Sigmoid colon (tissue), 7 donors: ENCODE measurements at regions of chr17 and their contacts with region 1.

Region 1: GRCh38 chr17:29574732-29575504 is 6.4 kb downstream of the TP53I13 start:
- DNase-seq: peak; percentile 58
- H3K4me3 ChIP-seq: no peak overlapping the region
- H3K27ac ChIP-seq: no peak overlapping the region
- H3K4me1 ChIP-seq: peaks cover 0 to 40% (median 32%) of the 10 kb centered on the region in 4 donors
- H3K27me3 ChIP-seq: no peaks in the 10 kb centered on the region
- CTCF ChIP-seq: no peak
- EP300 ChIP-seq: no peak
- POLR2A ChIP-seq: no peak

Region 2: DNA sequence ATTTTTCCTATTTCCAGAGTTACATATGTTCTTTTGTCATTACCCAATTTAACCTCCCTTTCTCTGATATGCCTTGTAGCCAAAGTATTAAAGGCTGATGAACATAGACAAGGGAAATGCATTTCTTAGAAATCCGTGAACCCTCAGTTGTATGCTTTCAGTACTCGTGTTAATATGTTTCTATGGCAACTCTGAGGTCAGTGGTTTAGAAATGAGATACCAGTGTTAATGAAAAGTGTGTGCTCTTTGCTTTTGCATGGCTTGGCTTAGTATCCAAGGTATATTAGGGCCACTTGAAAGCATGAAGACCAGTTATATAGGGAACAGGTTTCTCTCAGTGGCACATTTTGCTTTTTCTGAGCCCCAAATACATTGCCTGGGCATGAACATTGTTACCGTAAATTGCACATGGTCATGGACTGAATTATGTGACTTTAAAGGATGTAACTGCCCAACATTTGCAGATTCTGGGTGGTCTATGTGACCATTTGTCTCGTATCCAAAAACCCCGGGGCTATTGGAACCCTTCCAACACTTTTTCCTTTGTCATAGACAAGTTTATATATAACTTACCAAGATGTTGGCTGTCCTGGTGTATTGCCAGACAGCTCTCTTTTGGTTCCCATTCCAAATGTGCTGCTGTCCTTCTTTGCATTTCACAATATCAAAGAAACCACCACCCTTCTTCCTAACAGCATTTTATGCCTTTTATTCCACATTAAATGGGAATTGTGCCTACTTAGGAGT is 25.6 kb before region 1 on chr17:
- intact Hi-C with region 1: no loop called
- DNase-seq: no peak
- H3K4me3 ChIP-seq: no peak overlapping the region
- H3K27ac ChIP-seq: no peak overlapping the region
- H3K4me1 ChIP-seq: no peaks in the 10 kb centered on the region
- H3K27me3 ChIP-seq: no peaks in the 10 kb centered on the region
- CTCF ChIP-seq: no peak
- EP300 ChIP-seq: no peak
- POLR2A ChIP-seq: no peak

Region 3: DNA sequence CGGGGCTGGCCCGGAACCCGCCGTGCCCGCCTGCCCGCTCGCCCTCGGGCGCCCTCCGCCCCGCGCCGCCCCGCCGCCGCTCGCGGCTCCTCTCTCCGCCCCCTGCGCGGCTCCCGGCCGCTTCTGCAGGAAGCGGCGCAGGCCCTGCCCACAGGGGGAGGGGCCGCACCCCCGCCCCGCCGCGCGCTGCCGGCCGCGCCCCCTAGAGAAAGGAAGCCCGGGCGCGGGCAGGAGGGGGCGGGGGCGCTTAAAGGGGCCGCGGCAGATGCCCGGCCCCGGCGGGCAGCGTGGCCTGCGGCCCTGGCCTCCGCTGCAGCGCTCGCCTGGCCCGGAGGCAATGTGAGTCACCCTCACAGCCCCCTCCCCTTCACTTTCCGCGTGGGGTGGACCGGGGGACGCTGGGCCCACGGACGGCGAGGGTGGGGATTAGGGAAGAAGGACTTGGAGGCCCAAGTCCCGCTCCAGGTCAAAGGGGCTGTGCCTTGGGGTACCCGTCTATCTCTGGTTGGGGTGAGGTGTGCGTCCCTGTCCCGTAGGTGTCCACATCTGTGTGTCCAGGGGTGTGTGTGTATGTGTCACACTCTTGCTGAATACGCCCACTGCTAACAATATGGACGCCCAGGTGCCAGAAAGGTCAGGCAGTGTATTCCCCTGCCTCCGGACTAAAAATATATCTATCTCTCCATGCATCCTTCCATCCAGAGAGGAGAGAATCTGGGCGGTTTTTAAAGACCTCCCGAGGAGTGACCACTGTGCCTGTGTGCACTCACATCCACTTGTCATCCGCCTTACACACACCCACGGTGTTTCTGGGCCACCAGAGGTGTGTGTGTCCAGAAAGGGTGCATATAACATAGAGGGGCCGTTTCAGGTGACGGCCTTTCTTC is 14.8 kb after region 1 on chr17 and contains the start of gene GIT1:
- intact Hi-C with region 1: loop called (anchors 1 kb)
- DNase-seq: peak; percentile 92
- H3K4me3 ChIP-seq: peak within 1 kb of the TSS; percentile 66 to 90 (median 83)
- H3K27ac ChIP-seq: peak within 1 kb of the TSS; percentile 88 to 92 (median 90)
- H3K4me1 ChIP-seq: peaks cover 0 to 85% (median 76%) of the 10 kb centered on the region in 4 donors
- H3K27me3 ChIP-seq: no peaks in the 10 kb centered on the region
- CTCF ChIP-seq: no peak
- EP300 ChIP-seq: no peak
- POLR2A ChIP-seq: no peak
- total RNA-seq, gene GIT1: 13.6 to 31.3 (median 16.8) TPM

Region 4: DNA sequence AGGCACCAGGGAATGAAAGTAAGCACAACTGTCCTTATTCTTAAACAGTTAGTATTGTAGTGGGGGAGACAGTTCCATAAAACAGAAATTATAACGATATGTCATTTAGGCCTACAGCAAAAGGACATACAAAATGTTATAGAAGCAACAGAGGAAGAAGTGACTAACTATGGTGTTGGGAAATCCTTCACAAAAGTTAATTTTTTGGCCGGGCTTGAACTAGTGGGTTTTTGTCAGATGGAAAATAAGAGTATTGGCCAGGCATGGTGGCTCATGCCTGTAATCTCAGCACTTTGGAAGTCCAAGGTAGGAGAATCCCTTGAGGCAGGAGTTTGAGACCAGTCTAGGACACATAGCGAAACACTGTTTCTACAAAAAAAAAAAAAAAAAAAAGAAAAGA is 227.3 kb after region 1 on chr17:
- intact Hi-C with region 1: no loop called
- DNase-seq: no peak
- H3K4me3 ChIP-seq: no peak overlapping the region
- H3K27ac ChIP-seq: no peak overlapping the region
- H3K4me1 ChIP-seq: no peaks in the 10 kb centered on the region
- H3K27me3 ChIP-seq: no peaks in the 10 kb centered on the region
- CTCF ChIP-seq: no peak
- EP300 ChIP-seq: no peak
- POLR2A ChIP-seq: no peak